Activated CD4-positive, alpha-beta memory T cell treated with anti-CD3 and anti-CD28 coated beads for 36 hours (primary cell): ENCODE measurements at regions of chr6 and their contacts with region 1.

Region 1: GRCh38 chr6:90251295-90251992 is 45.2 kb downstream of the BACH2 start:
- DNase-seq: no peak
- H3K4me3 Mint-ChIP-seq: no peak overlapping the region
- H3K27ac Mint-ChIP-seq: peak overlapping the region; percentile 83
- H3K4me1 Mint-ChIP-seq: peaks cover 80% of the 10 kb centered on the region
- H3K27me3 Mint-ChIP-seq: no peaks in the 10 kb centered on the region

Region 2: GRCh38 chr6:90000864-90001731 is 250.3 kb before region 1 on chr6:
- CTCF ChIA-PET with region 1: no interaction called
- POLR2A ChIA-PET with region 1: no interaction called
- intact Hi-C with region 1: loop called (anchors 5 kb)
- DNase-seq: peak; percentile 76
- H3K4me3 Mint-ChIP-seq: no peak overlapping the region
- H3K27ac Mint-ChIP-seq: no peak overlapping the region
- H3K4me1 Mint-ChIP-seq: peaks cover 19% of the 10 kb centered on the region
- H3K27me3 Mint-ChIP-seq: no peaks in the 10 kb centered on the region

Region 3: DNA sequence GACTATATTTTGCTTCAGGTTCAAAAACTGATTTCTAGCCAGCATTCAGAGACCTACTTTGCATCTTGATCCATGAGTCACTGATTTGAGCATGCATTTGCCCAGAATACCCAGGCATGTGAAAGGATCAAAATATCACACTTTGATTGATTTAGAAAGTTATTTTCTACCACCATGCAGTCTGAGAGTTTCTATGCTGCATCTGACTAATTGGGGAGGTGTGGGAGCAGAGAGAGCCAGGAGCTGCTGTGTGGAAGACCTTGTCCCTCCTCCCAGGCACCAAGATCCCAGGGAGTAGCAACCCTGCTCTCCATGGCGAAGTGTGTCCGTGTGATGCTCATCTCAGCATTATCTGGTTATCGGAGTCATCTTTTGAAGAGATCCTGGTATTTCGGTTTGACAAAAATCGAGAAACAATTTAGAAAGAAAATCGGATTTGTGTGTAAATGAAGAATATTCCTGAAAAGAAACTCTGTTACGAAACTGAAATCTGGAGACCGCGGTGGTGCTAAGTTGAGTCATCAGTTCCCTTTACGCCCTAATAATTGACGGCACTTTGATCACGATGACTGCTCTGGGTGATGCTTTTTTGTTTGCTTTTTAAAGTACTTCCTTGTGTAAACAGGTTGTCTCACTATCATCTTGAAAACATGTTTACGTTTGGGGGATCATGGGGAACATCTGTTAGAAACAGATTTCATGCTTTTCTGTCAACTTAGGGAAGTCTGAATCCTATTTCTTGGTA is 148.2 kb before region 1 on chr6:
- CTCF ChIA-PET with region 1: no interaction called
- POLR2A ChIA-PET with region 1: no interaction called
- intact Hi-C with region 1: loop called (anchors 1 kb)
- DNase-seq: peak; percentile 66
- H3K4me3 Mint-ChIP-seq: peak overlapping the region; percentile 39
- H3K27ac Mint-ChIP-seq: peak overlapping the region; percentile 63
- H3K4me1 Mint-ChIP-seq: peaks cover 67% of the 10 kb centered on the region
- H3K27me3 Mint-ChIP-seq: peaks cover 5% of the 10 kb centered on the region

Region 4: DNA sequence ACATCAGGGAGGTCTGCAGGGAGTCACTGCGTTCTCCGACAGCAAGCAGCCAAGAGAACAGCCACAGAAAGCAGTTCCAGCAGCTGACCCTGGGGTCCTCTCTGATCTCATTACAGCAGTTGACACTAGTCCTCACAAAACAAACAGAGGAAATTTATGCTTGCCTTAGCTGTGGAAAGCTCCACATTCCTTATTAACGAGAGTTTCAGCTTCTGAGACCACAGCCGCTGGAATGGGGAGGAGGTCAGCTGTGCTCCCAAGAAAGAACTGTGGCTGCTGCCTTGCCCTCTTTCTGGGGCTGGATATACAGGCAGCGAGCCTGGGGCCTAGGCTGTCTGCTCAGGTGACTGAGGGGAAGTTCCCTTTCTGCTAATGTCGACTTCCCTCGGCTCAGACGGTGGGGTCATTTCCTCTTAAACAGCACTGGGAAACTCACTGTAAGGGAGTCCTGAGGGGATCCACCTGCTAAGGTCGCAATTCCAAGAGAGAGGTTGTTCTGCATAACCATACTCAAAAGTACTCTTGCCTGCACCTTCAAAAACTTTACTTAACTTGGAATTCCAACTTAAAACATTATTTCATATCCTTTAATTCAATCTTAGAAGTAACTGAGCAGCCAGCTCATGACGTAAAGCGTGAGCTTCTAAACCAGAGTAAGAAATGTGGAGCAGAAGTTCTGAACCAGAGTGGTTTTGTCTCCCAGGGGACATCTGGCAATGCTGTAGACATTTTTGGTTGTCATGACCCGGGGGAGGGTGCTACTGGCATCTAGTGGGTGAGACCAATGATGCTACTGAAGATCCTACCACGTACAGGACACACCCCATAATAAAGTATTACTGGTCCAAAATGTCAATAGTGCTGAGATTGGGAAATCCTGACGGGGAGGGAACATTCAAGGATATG is 35.1 kb before region 1 on chr6:
- CTCF ChIA-PET with region 1: interaction called, 4 read pairs
- POLR2A ChIA-PET with region 1: interaction called, 5 read pairs
- intact Hi-C with region 1: loop called (anchors 1 kb)
- DNase-seq: peak; percentile 39
- H3K4me3 Mint-ChIP-seq: no peak overlapping the region
- H3K27ac Mint-ChIP-seq: peak overlapping the region; percentile 56
- H3K4me1 Mint-ChIP-seq: peaks cover 27% of the 10 kb centered on the region
- H3K27me3 Mint-ChIP-seq: no peaks in the 10 kb centered on the region

Region 5: DNA sequence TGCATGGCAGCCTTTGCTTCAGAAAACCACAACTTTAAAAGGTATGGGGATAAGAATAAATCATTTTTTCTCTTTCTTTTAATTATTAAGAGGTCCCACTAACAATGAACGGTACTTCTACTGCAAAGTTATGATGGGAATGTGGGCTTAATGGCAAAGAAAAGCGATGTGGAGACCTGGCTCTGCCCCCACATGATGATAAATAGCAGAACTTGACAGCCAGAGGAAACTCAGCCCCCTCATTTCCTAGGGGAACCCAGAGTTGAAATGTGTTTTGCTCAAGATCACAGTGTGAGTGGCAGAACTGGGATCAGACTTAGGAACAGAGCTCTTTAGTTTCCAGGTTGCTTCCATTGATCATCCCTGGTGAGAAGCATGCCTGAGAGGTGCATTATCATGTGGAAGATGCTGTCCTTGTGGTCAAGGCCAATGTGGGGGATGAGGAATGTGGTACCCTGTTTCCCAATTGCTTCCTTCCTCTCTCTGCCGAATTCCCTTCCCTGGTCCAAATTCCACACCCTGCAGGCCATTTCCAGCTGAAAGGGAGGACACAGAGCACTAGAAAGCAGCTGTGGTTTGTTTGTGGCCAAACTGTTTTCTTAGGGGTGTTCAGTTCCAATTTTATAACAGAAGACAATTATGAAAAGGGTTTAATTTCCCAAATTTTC is 20.8 kb before region 1 on chr6:
- CTCF ChIA-PET with region 1: no interaction called
- POLR2A ChIA-PET with region 1: interaction called, 4 read pairs
- intact Hi-C with region 1: loop called (anchors 1 kb)
- DNase-seq: no peak
- H3K4me3 Mint-ChIP-seq: no peak overlapping the region
- H3K27ac Mint-ChIP-seq: no peak overlapping the region
- H3K4me1 Mint-ChIP-seq: peaks cover 88% of the 10 kb centered on the region
- H3K27me3 Mint-ChIP-seq: no peaks in the 10 kb centered on the region

Region 6: GRCh38 chr6:90274451-90275030 is 23.1 kb after region 1 on chr6:
- CTCF ChIA-PET with region 1: interaction called, 14 read pairs
- POLR2A ChIA-PET with region 1: interaction called, 13 read pairs
- intact Hi-C with region 1: loop called (anchors 1 kb)
- DNase-seq: peak; percentile 96
- H3K4me3 Mint-ChIP-seq: peak overlapping the region; percentile 27
- H3K27ac Mint-ChIP-seq: peak overlapping the region; percentile 87
- H3K4me1 Mint-ChIP-seq: peaks cover 86% of the 10 kb centered on the region
- H3K27me3 Mint-ChIP-seq: no peaks in the 10 kb centered on the region

Region 7: GRCh38 chr6:90458353-90459224 is 207.1 kb after region 1 on chr6:
- CTCF ChIA-PET with region 1: no interaction called
- POLR2A ChIA-PET with region 1: interaction called, 4 read pairs
- intact Hi-C with region 1: loop called (anchors 1 kb)
- DNase-seq: peak; percentile 94
- H3K4me3 Mint-ChIP-seq: peak overlapping the region; percentile 40
- H3K27ac Mint-ChIP-seq: peak overlapping the region; percentile 95
- H3K4me1 Mint-ChIP-seq: peaks cover 87% of the 10 kb centered on the region
- H3K27me3 Mint-ChIP-seq: no peaks in the 10 kb centered on the region

Region 8: DNA sequence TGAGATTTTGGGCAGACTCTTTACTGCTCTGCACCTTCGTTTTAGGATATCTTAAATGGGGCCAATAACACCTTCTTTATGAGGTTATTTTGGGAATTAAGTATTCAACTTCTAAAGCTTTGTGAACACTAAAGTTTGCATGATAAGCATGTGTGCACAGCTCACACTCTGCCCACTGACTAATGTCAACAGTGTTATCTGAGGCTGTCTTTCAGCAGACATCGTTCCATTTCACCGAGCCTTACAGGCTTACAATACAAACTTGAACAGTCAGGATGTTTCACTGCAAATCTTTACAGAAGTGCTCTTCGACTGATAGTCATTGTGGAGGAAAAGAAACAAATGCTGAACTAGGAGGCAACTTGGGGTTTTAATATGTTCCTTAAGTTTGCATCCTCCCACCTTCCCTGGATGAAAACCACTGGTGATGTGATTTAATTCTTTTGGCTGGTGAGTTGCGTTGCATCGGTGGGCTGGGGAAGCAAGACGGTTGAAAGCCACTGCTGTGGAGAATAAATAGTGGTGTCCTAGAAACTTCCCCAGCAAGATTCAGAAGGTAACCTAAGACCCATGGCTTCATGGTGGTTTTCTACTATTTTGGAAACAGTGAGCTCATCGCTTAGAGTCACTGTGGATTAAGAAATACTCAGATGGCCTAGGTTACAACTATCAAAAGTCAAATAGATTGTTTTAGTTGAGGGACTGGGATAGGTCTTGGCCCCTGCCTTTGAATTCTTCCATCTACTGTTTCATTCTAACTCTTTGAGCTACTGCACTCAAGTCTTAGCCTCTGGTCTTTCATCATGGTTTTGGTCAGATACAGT is 502.6 kb after region 1 on chr6:
- CTCF ChIA-PET with region 1: no interaction called
- POLR2A ChIA-PET with region 1: no interaction called
- intact Hi-C with region 1: no loop called
- DNase-seq: no peak
- H3K4me3 Mint-ChIP-seq: no peak overlapping the region
- H3K27ac Mint-ChIP-seq: no peak overlapping the region
- H3K4me1 Mint-ChIP-seq: no peaks in the 10 kb centered on the region
- H3K27me3 Mint-ChIP-seq: peaks cover 7% of the 10 kb centered on the region